Endothelial cell of umbilical vein (primary cell): ENCODE measurements at regions of chr2 and their contacts with region 1.

Region 1: DNA sequence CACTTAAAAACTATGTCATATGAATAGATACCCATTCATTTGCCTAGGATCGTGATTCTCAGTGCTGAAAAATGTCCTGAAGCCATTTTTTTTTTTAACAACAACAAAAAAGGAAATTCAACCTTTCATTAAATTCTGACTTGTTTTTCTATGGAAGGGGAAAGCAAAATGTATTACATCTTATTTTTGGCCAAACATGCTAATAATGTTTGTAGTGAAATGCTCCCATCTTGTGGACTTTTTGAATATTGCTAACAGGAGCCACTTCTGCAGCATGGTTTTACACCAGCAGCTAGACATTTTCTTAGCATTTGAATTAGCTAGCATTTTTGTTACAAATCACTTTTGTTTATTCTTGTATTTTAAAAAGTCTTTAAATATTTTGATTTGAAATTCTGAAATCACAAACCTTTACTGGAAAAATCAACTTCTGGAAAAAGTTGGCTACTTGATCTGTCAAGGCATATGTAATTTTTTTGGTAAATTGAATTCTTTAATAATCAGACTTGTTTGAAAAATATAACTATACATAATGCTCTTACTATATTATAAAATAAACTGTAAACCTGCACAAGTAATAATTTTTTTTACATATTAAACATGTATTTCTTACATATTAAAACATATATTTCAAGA is 75.8 kb downstream of the KIDINS220 start:
- DNase-seq: peak; percentile 47
- H3K4me3 ChIP-seq: no peak overlapping the region
- H3K27ac ChIP-seq: no peak overlapping the region
- H3K4me1 ChIP-seq: no peaks in the 10 kb centered on the region
- H3K27me3 ChIP-seq: no peaks in the 10 kb centered on the region
- CTCF ChIP-seq: peak in 1 of 2 donors; percentile 21
- POLR2A ChIP-seq: no peak

Region 2: DNA sequence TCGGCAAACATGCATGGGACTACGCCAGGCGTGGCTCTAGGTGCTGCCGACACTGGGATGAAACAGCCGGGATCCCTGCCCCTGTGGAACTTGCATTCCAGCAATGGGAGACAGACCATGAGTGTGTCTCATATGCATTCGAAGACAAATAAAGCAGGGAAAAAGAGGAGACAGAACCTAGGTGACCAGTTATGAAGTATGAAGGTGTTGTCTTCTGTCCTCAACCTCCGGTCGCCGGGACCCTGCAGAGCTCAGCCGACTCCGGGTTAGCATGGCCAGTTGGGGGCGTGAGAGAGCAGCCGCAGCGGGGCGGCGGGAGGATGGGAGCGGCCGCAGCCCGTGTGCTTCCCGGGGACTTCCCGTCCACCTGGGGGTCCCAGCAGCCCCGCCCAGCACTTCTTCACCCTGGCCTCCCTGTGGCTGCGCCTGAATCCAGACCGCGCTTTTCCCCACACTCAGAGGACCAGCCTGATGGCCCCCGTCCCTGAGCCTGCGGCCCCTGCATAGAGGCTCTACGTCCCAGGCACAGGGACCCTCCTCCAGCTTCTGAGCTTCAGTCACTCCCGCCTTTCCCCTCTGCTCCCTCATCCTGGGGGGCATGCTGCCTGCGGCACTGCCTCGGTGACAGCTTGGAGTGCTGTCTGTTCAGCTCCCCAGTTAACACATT is 68.4 kb before region 1 on chr2:
- CTCF ChIA-PET with region 1: interaction called, 6 read pairs
- POLR2A ChIA-PET with region 1: no interaction called
- dilution Hi-C with region 1: no loop called
- intact Hi-C with region 1: loop called (anchors 1 kb)
- DNase-seq: peak; percentile 7
- H3K4me3 ChIP-seq: no peak overlapping the region
- H3K27ac ChIP-seq: no peak overlapping the region
- H3K4me1 ChIP-seq: no peaks in the 10 kb centered on the region
- H3K27me3 ChIP-seq: peaks cover 0 to 2% of the 10 kb centered on the region in 2 experiments
- CTCF ChIP-seq: peak; percentile 58 to 77
- POLR2A ChIP-seq: no peak

Region 3: GRCh38 chr2:10548626-10549025 is 1787.0 kb after region 1 on chr2:
- CTCF ChIA-PET with region 1: no interaction called
- POLR2A ChIA-PET with region 1: no interaction called
- dilution Hi-C with region 1: no loop called
- intact Hi-C with region 1: no loop called
- DNase-seq: peak; percentile 52
- H3K4me3 ChIP-seq: no peak overlapping the region
- H3K27ac ChIP-seq: no peak overlapping the region
- H3K4me1 ChIP-seq: peaks cover 10% of the 10 kb centered on the region
- H3K27me3 ChIP-seq: no peaks in the 10 kb centered on the region
- CTCF ChIP-seq: peak in 1 of 2 donors; percentile 9
- POLR2A ChIP-seq: no peak